GM12878 (cell line): ENCODE measurements at regions of chr1 and their contacts with region 1.

Region 1: DNA sequence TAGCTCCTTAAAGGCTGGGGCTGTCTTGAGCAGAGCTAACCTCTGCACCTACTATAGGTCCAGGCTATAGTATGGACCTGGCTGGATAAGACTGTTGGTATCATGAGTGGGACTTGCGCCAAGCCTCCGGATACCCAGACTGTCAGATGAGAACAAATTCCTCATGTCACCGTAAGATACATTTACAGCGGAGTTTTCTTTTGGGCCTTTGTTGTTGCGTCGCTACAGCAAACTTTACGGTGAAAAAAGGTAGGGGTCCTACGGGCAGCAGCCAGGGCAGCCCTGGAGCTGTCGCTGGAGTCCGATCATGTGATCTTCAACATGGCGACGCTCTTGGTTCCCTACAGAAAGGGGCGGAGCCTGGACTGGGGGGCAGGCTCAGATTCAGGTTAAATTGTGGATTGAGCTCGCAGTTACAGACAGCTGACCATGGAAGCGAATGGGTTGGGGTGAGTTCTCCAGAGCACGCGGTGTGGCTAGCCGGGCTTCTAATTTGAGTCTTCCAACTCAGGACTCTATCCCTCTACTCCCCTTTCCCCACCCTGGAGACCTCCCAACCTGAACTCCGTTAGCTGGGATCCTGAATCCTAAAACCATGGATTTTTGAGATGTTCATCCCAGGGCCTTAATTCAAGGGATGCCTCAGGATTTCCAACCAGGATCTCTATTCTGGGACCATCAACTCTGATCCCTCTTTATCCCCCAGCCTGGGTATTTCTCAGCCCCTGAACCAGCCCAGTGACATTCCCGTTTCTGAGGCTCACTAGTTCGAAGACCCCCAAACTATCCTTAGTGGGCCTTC is at the start of gene UROD:
- DNase-seq: peak; percentile 90
- ATAC-seq: peak; percentile 83
- H3K4me3 ChIP-seq: peak within 1 kb of the TSS; percentile 90
- H3K27ac ChIP-seq: peak within 1 kb of the TSS; percentile 79
- H3K4me1 ChIP-seq: peaks cover 17% of the 10 kb centered on the region
- H3K27me3 ChIP-seq: no peaks in the 10 kb centered on the region
- CTCF ChIP-seq: no peak
- EP300 ChIP-seq: peak in 1 of 2 experiments; percentile 73; a peak in 2 of 4 replicates
- POLR2A ChIP-seq: peak; percentile 86
- RAD21 ChIP-seq: no peak
- polyA plus RNA-seq, gene UROD: 236 to 330 TPM

Region 2: GRCh38 chr1:44730741-44731512 is 281.1 kb before region 1 on chr1 and contains the start of gene RNU5D-1:
- CTCF ChIA-PET with region 1: interaction called, 35 read pairs
- POLR2A ChIA-PET with region 1: interaction called, 11 read pairs
- RAD21 ChIA-PET with region 1: interaction called, 30 read pairs
- SMC1A ChIA-PET with region 1: interaction called, 19 read pairs
- in situ Hi-C with region 1: no loop called
- intact Hi-C with region 1: loop called (anchors 5 kb)
- DNase-seq: peak; percentile 98
- ATAC-seq: peak; percentile 87
- H3K4me3 ChIP-seq: peak within 1 kb of the TSS; percentile 47; the same call in 1 of the 2 replicates
- H3K27ac ChIP-seq: peak within 1 kb of the TSS; percentile 100
- H3K4me1 ChIP-seq: peaks cover 14% of the 10 kb centered on the region
- H3K27me3 ChIP-seq: no peaks in the 10 kb centered on the region
- CTCF ChIP-seq: peak; percentile 72 to 88 (median 83)
- EP300 ChIP-seq: peak in 1 of 2 experiments; percentile 44; a peak in 1 of 4 replicates
- POLR2A ChIP-seq: peak; percentile 96
- RAD21 ChIP-seq: peak; percentile 58
- polyA plus RNA-seq, gene RNU5D-1: not detected

Region 3: GRCh38 chr1:44792783-44793714 is 219.0 kb before region 1 on chr1:
- CTCF ChIA-PET with region 1: interaction called, 32 read pairs
- POLR2A ChIA-PET with region 1: interaction called, 3 read pairs
- RAD21 ChIA-PET with region 1: interaction called, 16 read pairs
- SMC1A ChIA-PET with region 1: interaction called, 12 read pairs
- in situ Hi-C with region 1: no loop called
- intact Hi-C with region 1: loop called (anchors 2 kb)
- DNase-seq: no peak
- ATAC-seq: no peak
- H3K4me3 ChIP-seq: no peak overlapping the region
- H3K27ac ChIP-seq: no peak overlapping the region
- H3K4me1 ChIP-seq: no peaks in the 10 kb centered on the region
- H3K27me3 ChIP-seq: no peaks in the 10 kb centered on the region
- CTCF ChIP-seq: no peak
- EP300 ChIP-seq: no peak
- POLR2A ChIP-seq: no peak
- RAD21 ChIP-seq: no peak

Region 4: DNA sequence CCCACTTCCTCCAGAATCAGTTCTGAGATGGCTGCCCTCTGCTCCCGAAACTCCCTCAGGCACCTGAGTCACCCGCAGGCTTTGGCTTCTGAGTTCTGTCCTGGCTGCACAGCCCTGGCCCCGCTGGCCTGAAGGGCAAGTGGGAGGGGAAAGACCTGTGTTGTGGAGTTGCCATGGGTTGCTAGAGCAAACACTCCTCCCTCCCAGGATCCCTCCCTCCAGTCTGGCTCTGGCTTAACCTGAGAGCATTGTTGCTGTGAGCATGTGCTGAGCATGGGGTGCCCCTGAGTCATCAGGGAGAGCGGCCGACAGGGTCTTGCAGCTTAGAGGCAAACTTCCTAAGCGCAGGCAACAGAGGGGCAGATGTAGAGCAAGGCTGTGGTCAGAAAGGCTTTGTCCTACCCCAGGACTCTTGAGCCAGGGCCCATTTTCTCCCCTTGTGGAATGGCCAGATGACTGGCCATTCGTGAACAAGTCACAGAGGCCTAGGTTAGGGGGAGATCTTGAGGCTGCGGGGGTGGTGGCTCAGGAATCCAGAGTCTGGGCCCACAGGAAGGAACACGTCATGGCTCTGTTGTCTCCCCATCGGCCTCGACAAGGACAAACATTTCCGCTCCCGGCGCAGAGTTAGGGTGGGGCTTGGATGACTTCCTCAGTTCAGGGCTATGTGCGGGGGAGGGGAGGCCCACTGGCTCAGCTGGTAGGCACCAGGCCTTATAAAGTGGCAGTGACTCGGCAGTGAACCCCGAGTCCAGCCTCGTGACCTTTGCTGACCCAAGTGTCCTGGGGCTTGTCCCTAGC is 204.6 kb before region 1 on chr1 and contains the start of gene DYNLT4:
- CTCF ChIA-PET with region 1: interaction called, 3 read pairs
- POLR2A ChIA-PET with region 1: interaction called, 6 read pairs
- RAD21 ChIA-PET with region 1: interaction called, 17 read pairs
- SMC1A ChIA-PET with region 1: interaction called, 4 read pairs
- in situ Hi-C with region 1: no loop called
- intact Hi-C with region 1: no loop called
- DNase-seq: peak; percentile 65
- ATAC-seq: peak; percentile 64
- H3K4me3 ChIP-seq: no peak within 1 kb of the TSS
- H3K27ac ChIP-seq: peak within 1 kb of the TSS; percentile 95
- H3K4me1 ChIP-seq: peaks cover 53% of the 10 kb centered on the region
- H3K27me3 ChIP-seq: no peaks in the 10 kb centered on the region
- CTCF ChIP-seq: no peak
- EP300 ChIP-seq: peak in 1 of 2 experiments; percentile 44; a peak in 2 of 4 replicates
- POLR2A ChIP-seq: no peak; the same call in none of the 2 replicates
- RAD21 ChIP-seq: no peak
- polyA plus RNA-seq, gene DYNLT4: not detected

Region 5: DNA sequence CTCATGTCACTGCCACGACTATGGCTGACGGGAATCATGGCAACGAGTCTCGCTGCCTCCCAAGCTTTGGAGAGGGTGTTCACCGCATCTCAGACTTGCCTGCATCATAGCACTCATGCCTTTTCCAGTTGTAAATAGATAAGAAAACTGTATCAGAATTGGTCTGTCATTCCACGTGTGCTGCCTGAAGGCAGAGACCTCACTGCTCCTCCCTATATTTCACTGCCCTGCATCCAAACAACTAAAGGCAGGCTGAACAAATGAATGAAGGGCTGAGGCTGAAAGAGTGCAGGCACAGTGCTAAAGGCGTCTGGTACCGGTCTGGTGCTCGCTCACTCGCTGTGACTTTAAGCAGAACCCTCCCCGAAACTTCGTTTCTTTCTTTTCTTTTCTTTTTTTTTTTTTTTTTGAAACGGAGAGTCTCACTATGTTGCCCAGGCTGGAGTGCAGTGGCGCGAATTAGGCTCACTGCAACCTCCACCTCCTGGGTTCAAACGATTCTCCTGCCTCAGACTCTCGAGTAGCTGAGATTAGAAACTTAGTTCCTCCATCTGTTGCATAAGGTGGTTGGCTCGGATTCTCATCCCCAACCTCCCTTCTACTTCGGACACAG is 26.2 kb before region 1 on chr1:
- CTCF ChIA-PET with region 1: interaction called, 18 read pairs
- POLR2A ChIA-PET with region 1: interaction called, 20 read pairs
- RAD21 ChIA-PET with region 1: interaction called, 14 read pairs
- SMC1A ChIA-PET with region 1: interaction called, 11 read pairs
- in situ Hi-C with region 1: no loop called
- intact Hi-C with region 1: no loop called
- DNase-seq: no peak
- ATAC-seq: peak; percentile 20
- H3K4me3 ChIP-seq: peak overlapping the region; percentile 86
- H3K27ac ChIP-seq: peak overlapping the region; percentile 56
- H3K4me1 ChIP-seq: peaks cover 9% of the 10 kb centered on the region
- H3K27me3 ChIP-seq: no peaks in the 10 kb centered on the region
- CTCF ChIP-seq: no peak
- EP300 ChIP-seq: no peak
- POLR2A ChIP-seq: no peak
- RAD21 ChIP-seq: no peak

Region 6: GRCh38 chr1:45291716-45292115 is 279.7 kb after region 1 on chr1:
- CTCF ChIA-PET with region 1: interaction called, 252 read pairs
- POLR2A ChIA-PET with region 1: interaction called, 3 read pairs
- RAD21 ChIA-PET with region 1: interaction called, 313 read pairs
- SMC1A ChIA-PET with region 1: interaction called, 284 read pairs
- in situ Hi-C with region 1: no loop called
- intact Hi-C with region 1: no loop called
- DNase-seq: no peak
- ATAC-seq: no peak
- H3K4me3 ChIP-seq: no peak overlapping the region
- H3K27ac ChIP-seq: no peak overlapping the region
- H3K4me1 ChIP-seq: no peaks in the 10 kb centered on the region
- H3K27me3 ChIP-seq: no peaks in the 10 kb centered on the region
- CTCF ChIP-seq: no peak
- EP300 ChIP-seq: no peak
- POLR2A ChIP-seq: no peak
- RAD21 ChIP-seq: no peak

Region 7: GRCh38 chr1:45583264-45583665 is 571.2 kb after region 1 on chr1:
- CTCF ChIA-PET with region 1: no interaction called
- POLR2A ChIA-PET with region 1: no interaction called
- RAD21 ChIA-PET with region 1: interaction called, 3 read pairs
- SMC1A ChIA-PET with region 1: interaction called, 5 read pairs
- in situ Hi-C with region 1: loop called (anchors 5 kb)
- intact Hi-C with region 1: loop called (anchors 10 kb)
- DNase-seq: peak; percentile 98
- ATAC-seq: peak; percentile 89
- H3K4me3 ChIP-seq: peak overlapping the region; percentile 94
- H3K27ac ChIP-seq: peak overlapping the region; percentile 97
- H3K4me1 ChIP-seq: peaks cover 12% of the 10 kb centered on the region; the same call in 1 of the 2 replicates
- H3K27me3 ChIP-seq: no peaks in the 10 kb centered on the region
- CTCF ChIP-seq: no peak
- EP300 ChIP-seq: no peak
- POLR2A ChIP-seq: no peak
- RAD21 ChIP-seq: no peak

Region 8: GRCh38 chr1:46303038-46303871 is 1291.2 kb after region 1 on chr1 and contains the starts of genes LRRC41 and UQCRH:
- CTCF ChIA-PET with region 1: no interaction called
- POLR2A ChIA-PET with region 1: no interaction called
- RAD21 ChIA-PET with region 1: no interaction called
- SMC1A ChIA-PET with region 1: no interaction called
- in situ Hi-C with region 1: no loop called
- intact Hi-C with region 1: no loop called
- DNase-seq: peak; percentile 93
- ATAC-seq: peak; percentile 83
- H3K4me3 ChIP-seq: peak within 1 kb of the TSS; percentile 98
- H3K27ac ChIP-seq: peak within 1 kb of the TSS; percentile 91
- H3K4me1 ChIP-seq: peaks cover 15% of the 10 kb centered on the region
- H3K27me3 ChIP-seq: no peaks in the 10 kb centered on the region
- CTCF ChIP-seq: 0 out of 6 replicates have a peak, but pooled peaks of 1 of the 3 experiments have one; percentile 1
- EP300 ChIP-seq: no peak
- POLR2A ChIP-seq: peak; percentile 93
- RAD21 ChIP-seq: no peak
- polyA plus RNA-seq, gene LRRC41: 12.0 to 12.6 TPM
- polyA plus RNA-seq, gene UQCRH: 1,451 to 1,539 TPM